PC-9 (cell line): ENCODE measurements at regions of chr6 and their contacts with region 1.

Region 1: GRCh38 chr6:83884523-83884922 is 25.0 kb downstream of the CYB5R4 start:
- DNase-seq: peak in 1 of 2 experiments; percentile 59
- H3K4me3 ChIP-seq: no peak overlapping the region
- H3K27ac ChIP-seq: no peak overlapping the region
- H3K4me1 ChIP-seq: no peaks in the 10 kb centered on the region
- H3K27me3 ChIP-seq: no peaks in the 10 kb centered on the region
- CTCF ChIP-seq: peak; percentile 71

Region 2: DNA sequence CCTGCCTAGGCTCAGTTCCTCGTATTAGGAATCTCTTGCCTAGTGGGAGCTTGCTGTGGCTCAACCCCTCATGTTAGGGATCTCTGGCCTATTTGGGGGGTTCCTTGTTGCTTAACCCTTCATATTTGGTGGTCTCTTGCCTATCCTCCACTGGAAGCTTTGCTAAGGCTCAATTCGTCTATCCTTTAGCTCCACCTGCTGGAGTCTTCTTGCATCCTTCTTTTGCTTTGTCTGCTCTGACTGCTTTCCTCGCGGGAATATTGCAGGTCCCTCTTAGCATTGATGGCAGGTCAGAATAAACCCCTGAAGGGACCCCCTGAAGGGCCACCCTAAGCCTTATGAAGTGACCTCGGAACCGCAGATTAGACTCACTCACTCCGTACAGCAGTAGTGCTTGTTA is 1082.9 kb after region 1 on chr6:
- CTCF ChIA-PET with region 1: no interaction called
- POLR2A ChIA-PET with region 1: no interaction called
- intact Hi-C with region 1: loop called (anchors 5 kb)
- DNase-seq: peak in 1 of 2 experiments; percentile 2
- H3K4me3 ChIP-seq: no peak overlapping the region
- H3K27ac ChIP-seq: no peak overlapping the region
- H3K4me1 ChIP-seq: no peaks in the 10 kb centered on the region
- H3K27me3 ChIP-seq: no peaks in the 10 kb centered on the region
- CTCF ChIP-seq: peak; percentile 60